IMR-90 (cell line): ENCODE measurements at regions of chr7 and their contacts with region 1.

Region 1: DNA sequence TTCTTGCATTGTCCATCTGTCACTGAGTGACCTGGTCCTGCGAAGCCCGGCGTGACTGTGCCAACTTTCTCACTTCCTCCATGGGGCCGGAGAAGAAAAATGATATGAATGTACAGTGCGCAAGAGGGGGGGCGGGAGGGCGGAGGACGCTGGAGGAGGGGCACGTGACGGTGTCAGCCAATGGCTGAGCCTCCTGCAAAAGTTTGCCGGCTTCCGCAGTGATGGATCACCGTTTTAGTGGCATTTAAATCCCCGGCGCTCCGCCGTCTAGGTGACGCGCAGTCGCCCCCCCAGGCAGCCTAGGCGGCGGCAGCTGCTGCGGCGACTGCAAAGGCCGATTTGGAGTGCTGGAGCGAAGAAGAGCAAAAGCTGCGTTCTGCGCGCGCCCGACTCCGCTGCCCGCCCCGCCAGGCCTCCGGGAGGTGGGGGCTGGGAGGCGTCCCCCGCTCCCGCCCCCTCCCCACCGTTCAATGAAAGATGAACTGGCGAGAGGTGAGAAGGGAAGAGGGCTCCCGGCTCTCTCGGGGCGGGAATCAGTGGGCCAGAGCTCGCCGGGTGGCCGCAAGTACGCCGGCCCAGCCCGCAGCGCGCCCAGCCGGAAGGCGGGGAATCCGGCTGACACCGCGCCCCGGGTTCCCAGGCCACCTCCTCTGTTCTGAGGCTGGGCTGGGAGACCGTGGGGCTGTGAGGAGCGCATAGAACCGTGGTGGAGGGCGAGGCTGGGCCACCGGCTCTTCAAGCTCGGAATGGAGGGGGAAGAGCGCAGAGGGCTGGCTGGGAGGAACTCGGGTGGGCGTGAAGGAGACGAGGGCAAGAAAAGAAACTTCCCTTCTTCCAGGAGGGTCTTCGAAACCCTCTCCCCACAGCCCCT is at the start of gene HOXA1:
- DNase-seq: peak; percentile 95
- ATAC-seq: peak; percentile 73
- H3K4me3 ChIP-seq: peak within 1 kb of the TSS; percentile 92
- H3K27ac ChIP-seq: peak within 1 kb of the TSS; percentile 97
- H3K4me1 ChIP-seq: peaks cover 6% of the 10 kb centered on the region
- H3K27me3 ChIP-seq: no peaks in the 10 kb centered on the region
- CTCF ChIP-seq: 0 out of 2 replicates have a peak, but pooled peaks have one; percentile 2
- POLR2A ChIP-seq: peak; percentile 94
- RAD21 ChIP-seq: peak; percentile 36; the same call in 1 of the 2 replicates
- total RNA-seq, gene HOXA1: 0.54 and 0.83 TPM in 2 replicates

Region 2: GRCh38 chr7:26686448-26686981 is 409.6 kb before region 1 on chr7:
- CTCF ChIA-PET with region 1: interaction called, 4 read pairs
- POLR2A ChIA-PET with region 1: no interaction called
- dilution Hi-C with region 1: no loop called
- in situ Hi-C with region 1: no loop called
- intact Hi-C with region 1: loop called (anchors 2 kb)
- DNase-seq: peak; percentile 92
- ATAC-seq: peak; percentile 81
- H3K4me3 ChIP-seq: no peak overlapping the region
- H3K27ac ChIP-seq: peak overlapping the region; percentile 22; the same call in 1 of the 2 replicates
- H3K4me1 ChIP-seq: peaks cover 8% of the 10 kb centered on the region
- H3K27me3 ChIP-seq: no peaks in the 10 kb centered on the region
- CTCF ChIP-seq: peak; percentile 64
- POLR2A ChIP-seq: no peak
- RAD21 ChIP-seq: peak; percentile 61

Region 3: DNA sequence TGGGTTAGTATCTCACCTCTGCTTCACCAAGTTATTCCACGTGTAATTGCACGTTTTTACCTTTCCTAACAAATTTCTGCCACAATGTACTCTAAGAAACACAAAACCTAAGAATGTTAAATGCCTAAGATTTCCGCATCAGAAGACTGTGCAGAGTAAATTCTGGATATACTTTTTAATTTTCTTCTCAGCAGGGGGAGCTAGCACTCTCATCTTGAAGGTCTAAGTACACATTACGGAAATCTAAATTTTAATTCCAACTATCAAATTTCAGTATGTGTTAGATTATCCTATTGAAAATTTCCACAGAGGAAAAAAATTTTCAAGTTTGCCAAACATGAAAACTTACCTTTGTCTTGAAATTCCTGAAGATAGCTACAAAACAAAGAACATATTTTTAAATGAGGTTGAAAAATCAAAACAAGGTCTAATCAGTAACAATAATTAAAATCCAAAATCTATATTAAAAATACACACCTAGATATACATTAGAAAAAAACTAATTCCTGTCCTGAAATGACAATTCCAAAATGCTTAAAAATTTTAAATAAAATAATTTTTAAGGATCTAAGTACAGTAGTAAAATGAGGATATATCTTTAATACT is 242.2 kb before region 1 on chr7:
- CTCF ChIA-PET with region 1: interaction called, 3 read pairs
- POLR2A ChIA-PET with region 1: no interaction called
- dilution Hi-C with region 1: no loop called
- in situ Hi-C with region 1: loop called (anchors 5 kb)
- intact Hi-C with region 1: loop called (anchors 1 kb)
- DNase-seq: peak; percentile 75
- ATAC-seq: 0 out of 2 replicates have a peak, but pooled peaks have one; percentile 51
- H3K4me3 ChIP-seq: no peak overlapping the region
- H3K27ac ChIP-seq: no peak overlapping the region
- H3K4me1 ChIP-seq: no peaks in the 10 kb centered on the region; the same call in 1 of the 2 replicates
- H3K27me3 ChIP-seq: no peaks in the 10 kb centered on the region
- CTCF ChIP-seq: peak; percentile 70
- POLR2A ChIP-seq: no peak
- RAD21 ChIP-seq: peak; percentile 70

Region 4: GRCh38 chr7:26864309-26865093 is 231.6 kb before region 1 on chr7 and contains the start of gene SKAP2:
- CTCF ChIA-PET with region 1: no interaction called
- POLR2A ChIA-PET with region 1: no interaction called
- dilution Hi-C with region 1: no loop called
- in situ Hi-C with region 1: loop called (anchors 5 kb)
- intact Hi-C with region 1: loop called (anchors 2 kb)
- DNase-seq: peak; percentile 99
- ATAC-seq: peak; percentile 98
- H3K4me3 ChIP-seq: peak within 1 kb of the TSS; percentile 73
- H3K27ac ChIP-seq: peak within 1 kb of the TSS; percentile 77
- H3K4me1 ChIP-seq: no peaks in the 10 kb centered on the region
- H3K27me3 ChIP-seq: no peaks in the 10 kb centered on the region
- CTCF ChIP-seq: no peak
- POLR2A ChIP-seq: peak; percentile 85
- RAD21 ChIP-seq: no peak
- total RNA-seq, gene SKAP2: 5.7 and 11.1 TPM in 2 replicates

Region 5: DNA sequence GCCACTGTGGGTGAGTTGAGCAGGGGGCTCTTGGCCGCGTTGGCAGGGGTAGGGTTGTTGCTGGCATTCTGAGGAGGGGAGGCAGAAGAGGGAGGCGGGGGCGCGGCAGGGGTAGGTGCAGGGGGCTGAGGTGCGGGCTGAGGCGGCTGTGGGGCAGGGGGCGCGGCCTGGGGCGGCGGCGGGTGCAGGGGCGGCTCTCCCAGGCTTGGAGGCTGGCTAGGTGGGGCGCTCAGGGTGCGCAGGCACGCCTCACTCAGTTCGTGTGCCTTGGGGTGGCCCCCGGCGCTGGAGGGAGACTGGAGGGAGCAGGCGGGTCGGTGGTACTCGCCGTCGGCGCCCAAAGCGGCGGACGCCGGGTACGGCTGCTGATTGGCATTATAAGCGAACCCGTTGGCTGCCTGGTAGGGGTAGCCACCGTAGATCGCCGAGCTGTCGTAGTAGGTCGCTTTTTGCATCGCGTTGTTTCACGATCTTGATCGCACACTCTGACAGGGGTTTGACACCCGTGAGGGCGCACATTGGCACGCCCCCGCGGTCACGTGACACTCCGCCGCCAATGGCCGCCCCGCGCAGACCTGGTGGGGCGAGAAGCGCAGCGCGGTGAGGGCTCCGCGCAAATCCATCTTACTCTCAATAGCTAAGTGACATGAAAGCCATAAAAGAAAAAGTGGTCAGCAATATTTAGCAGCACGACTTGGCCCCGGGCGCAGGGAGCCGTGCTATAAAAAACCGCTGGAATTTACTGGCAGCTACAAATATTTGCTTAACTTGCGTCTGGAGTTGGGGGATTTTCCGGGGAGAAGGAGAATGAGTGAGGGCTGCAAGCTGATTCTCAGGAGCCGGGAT is 14.3 kb after region 1 on chr7:
- CTCF ChIA-PET with region 1: interaction called, 4 read pairs
- POLR2A ChIA-PET with region 1: interaction called, 14 read pairs
- dilution Hi-C with region 1: no loop called
- in situ Hi-C with region 1: no loop called
- intact Hi-C with region 1: loop called (anchors 2 kb)
- DNase-seq: peak; percentile 92
- ATAC-seq: peak; percentile 13
- H3K4me3 ChIP-seq: peak overlapping the region; percentile 13; the same call in 1 of the 2 replicates
- H3K27ac ChIP-seq: peak overlapping the region; percentile 98
- H3K4me1 ChIP-seq: peaks cover 32% of the 10 kb centered on the region
- H3K27me3 ChIP-seq: no peaks in the 10 kb centered on the region
- CTCF ChIP-seq: no peak
- POLR2A ChIP-seq: no peak
- RAD21 ChIP-seq: no peak

Region 6: GRCh38 chr7:27124096-27124901 is 28.2 kb after region 1 on chr7:
- CTCF ChIA-PET with region 1: interaction called, 4 read pairs
- POLR2A ChIA-PET with region 1: interaction called, 3 read pairs
- dilution Hi-C with region 1: no loop called
- in situ Hi-C with region 1: no loop called
- intact Hi-C with region 1: loop called (anchors 2 kb)
- DNase-seq: peak; percentile 97
- ATAC-seq: peak; percentile 36
- H3K4me3 ChIP-seq: peak overlapping the region; percentile 48
- H3K27ac ChIP-seq: peak overlapping the region; percentile 99
- H3K4me1 ChIP-seq: peaks cover 35% of the 10 kb centered on the region
- H3K27me3 ChIP-seq: no peaks in the 10 kb centered on the region
- CTCF ChIP-seq: no peak
- POLR2A ChIP-seq: no peak
- RAD21 ChIP-seq: no peak; the same call in 1 of the 2 replicates

Region 7: DNA sequence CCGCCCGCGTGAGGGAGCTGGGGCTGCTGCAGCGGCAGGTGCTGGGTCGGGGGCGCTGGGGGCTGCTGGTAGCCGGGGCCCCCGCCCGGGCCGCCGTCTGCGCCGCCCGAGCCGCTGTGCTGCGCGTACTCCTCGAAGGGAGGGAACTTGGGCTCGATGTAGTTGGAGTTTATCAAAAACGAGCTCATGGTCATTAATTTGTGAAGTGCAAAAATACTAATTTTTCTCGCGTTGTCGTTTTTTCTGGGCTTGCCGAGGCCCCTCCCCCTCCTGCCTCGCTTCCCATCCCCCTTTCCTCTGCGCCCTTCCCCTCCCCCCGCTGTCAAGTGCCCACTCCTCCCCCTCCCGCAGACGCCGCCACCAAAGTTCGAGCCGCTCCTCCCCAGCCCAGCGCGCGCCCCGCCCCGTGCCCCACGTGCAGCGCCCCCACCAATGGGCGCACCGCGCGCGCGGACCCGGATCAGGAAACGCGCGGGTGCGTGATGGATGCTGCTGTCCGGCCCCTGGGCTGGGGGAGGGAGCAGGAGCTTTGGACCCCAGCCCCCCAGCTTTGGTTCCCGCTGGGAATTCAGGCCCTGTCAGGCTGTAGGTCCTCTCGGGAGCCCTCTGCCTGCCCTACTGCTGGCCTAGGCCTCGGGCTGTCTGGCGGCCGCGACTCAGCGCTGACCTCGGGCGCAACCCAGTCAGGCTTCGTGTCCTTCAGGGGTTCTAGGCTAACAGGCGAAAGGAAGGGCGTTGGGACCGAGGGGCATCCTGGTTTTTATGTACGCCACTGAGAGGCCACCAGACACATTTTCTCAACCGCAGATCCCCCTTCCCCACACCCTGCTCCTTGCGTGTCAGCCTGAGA is 34.6 kb after region 1 on chr7 and contains the start of gene HOXA4:
- CTCF ChIA-PET with region 1: interaction called, 4 read pairs
- POLR2A ChIA-PET with region 1: interaction called, 3 read pairs
- dilution Hi-C with region 1: no loop called
- in situ Hi-C with region 1: no loop called
- intact Hi-C with region 1: loop called (anchors 2 kb)
- DNase-seq: peak; percentile 83
- ATAC-seq: peak; percentile 92
- H3K4me3 ChIP-seq: peak within 1 kb of the TSS; percentile 76
- H3K27ac ChIP-seq: peak within 1 kb of the TSS; percentile 77
- H3K4me1 ChIP-seq: peaks cover 24% of the 10 kb centered on the region
- H3K27me3 ChIP-seq: no peaks in the 10 kb centered on the region
- CTCF ChIP-seq: no peak
- POLR2A ChIP-seq: peak; percentile 31; the same call in 1 of the 2 replicates
- RAD21 ChIP-seq: no peak
- total RNA-seq, gene HOXA4: 0.36 and 1.1 TPM in 2 replicates

Region 8: GRCh38 chr7:27196287-27196767 is 100.2 kb after region 1 on chr7:
- CTCF ChIA-PET with region 1: no interaction called
- POLR2A ChIA-PET with region 1: no interaction called
- dilution Hi-C with region 1: no loop called
- in situ Hi-C with region 1: no loop called
- intact Hi-C with region 1: no loop called
- DNase-seq: peak; percentile 71
- ATAC-seq: peak; percentile 41; the same call in 1 of the 2 replicates
- H3K4me3 ChIP-seq: no peak overlapping the region
- H3K27ac ChIP-seq: no peak overlapping the region
- H3K4me1 ChIP-seq: no peaks in the 10 kb centered on the region
- H3K27me3 ChIP-seq: peaks cover 86% of the 10 kb centered on the region
- CTCF ChIP-seq: peak; percentile 84
- POLR2A ChIP-seq: 0 out of 2 replicates have a peak, but pooled peaks have one; percentile 37
- RAD21 ChIP-seq: peak; percentile 94